Activated T-helper 2 cell treated with anti-CD3 and anti-CD28 coated beads, Interferon-gamma antibody, Interleukin-2, Interleukin-4, amounts not matched to agents 10 μg/mL and 5 μg/mL and 100 μg/mL, durations not matched to agents 14 hours and 24 hours and 36 hours (primary cell): ENCODE measurements at regions of chr12 and their contacts with region 1.

Region 1: GRCh38 chr12:3135522-3136461 is 58.6 kb downstream of the TSPAN9 start:
- DNase-seq: peak; percentile 22
- H3K4me3 Mint-ChIP-seq: no peak overlapping the region
- H3K27ac Mint-ChIP-seq: no peak overlapping the region
- H3K4me1 Mint-ChIP-seq: no peaks in the 10 kb centered on the region
- H3K27me3 Mint-ChIP-seq: peaks cover 26% of the 10 kb centered on the region

Region 2: GRCh38 chr12:3202734-3203446 is 67.1 kb after region 1 on chr12:
- intact Hi-C with region 1: loop called (anchors 1 kb)
- DNase-seq: no peak
- H3K4me3 Mint-ChIP-seq: no peak overlapping the region
- H3K27ac Mint-ChIP-seq: no peak overlapping the region
- H3K4me1 Mint-ChIP-seq: no peaks in the 10 kb centered on the region
- H3K27me3 Mint-ChIP-seq: peaks cover 31% of the 10 kb centered on the region

Region 3: GRCh38 chr12:3275171-3276041 is 139.6 kb after region 1 on chr12:
- intact Hi-C with region 1: loop called (anchors 2 kb)
- DNase-seq: peak; percentile 52
- H3K4me3 Mint-ChIP-seq: no peak overlapping the region
- H3K27ac Mint-ChIP-seq: no peak overlapping the region
- H3K4me1 Mint-ChIP-seq: no peaks in the 10 kb centered on the region
- H3K27me3 Mint-ChIP-seq: peaks cover 2% of the 10 kb centered on the region